ENCODE measurements at regions of chr14 and their contacts with region 1.

Region 1: DNA sequence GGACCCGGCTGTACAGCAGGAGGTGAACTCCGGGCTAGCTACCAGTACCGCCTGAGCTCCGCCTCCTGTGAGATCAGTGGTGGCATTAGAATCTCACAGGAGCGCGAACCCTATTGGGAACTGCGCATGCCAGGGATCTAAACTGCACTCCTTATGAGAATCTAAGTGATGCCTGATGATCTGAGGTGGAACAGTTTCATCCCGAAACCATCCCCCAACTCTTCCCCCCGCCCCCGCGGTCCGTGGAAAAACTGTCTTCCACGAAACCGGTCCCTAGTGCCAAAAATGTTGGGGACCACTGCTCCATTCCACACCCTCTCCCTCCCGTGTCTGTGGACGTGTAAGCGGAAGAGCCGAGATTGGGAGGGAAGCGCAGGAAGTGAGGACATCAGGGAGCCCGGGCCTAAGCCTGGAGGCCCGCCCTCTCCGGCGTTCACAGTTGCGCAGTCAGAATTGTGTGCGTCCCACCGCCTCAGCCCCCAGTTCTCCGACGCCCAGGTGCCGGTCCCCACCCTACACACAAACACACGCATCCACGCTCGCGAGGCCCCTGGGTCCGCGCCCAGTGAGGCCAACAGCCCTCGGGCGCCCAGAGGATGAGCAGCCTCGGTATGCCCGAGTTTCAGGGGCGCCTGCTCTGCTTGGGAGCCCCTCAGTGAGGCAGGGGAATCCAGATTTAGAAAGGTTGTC is 1.8 kb upstream of the RNASE4 start:
- DNase-seq: peak; percentile 85
- H3K4me3 Mint-ChIP-seq: no peak overlapping the region
- H3K27ac Mint-ChIP-seq: no peak overlapping the region
- H3K4me1 Mint-ChIP-seq: peaks cover 27% of the 10 kb centered on the region
- H3K27me3 Mint-ChIP-seq: no peaks in the 10 kb centered on the region

Region 2: DNA sequence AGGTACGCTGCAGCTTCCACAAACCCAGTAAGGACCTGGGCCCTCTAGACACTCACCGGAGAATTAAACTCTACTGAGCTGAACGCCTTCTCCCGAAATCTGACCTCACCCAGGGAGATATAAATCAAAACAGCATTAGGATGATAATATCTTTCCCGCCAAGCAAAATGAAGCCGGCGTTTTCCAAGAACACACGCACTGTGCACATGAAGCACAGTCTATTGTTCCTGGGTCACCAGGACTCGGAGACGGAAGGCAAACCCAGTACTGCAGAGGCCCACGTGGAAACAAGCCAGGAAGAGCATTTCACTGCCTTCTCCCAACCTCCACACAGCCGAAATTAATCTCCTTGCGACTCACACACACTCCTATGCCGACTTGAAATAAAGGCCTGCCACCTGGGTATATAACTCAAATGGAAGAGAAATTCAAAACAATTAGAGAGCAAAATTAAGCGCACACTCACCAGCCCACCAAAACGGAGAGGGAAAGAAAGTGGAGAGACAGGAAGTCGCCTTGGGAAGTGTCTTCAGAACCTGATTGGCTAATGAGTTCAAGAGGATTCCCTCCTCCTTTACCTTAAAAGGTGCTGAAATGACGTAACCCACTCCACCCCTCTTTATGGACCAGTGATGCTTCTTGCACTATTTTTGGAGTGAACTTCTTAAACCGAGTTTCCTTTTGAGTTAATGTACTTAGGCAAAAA is 349.6 kb before region 1 on chr14 and contains the start of gene CCNB1IP1:
- CTCF ChIA-PET with region 1: interaction called, 5 read pairs
- POLR2A ChIA-PET with region 1: interaction called, 4 read pairs
- intact Hi-C with region 1: loop called (anchors 2 kb)
- DNase-seq: peak; percentile 54
- H3K4me3 Mint-ChIP-seq: peak within 1 kb of the TSS; percentile 99
- H3K27ac Mint-ChIP-seq: peak within 1 kb of the TSS; percentile 92
- H3K4me1 Mint-ChIP-seq: peaks cover 36% of the 10 kb centered on the region
- H3K27me3 Mint-ChIP-seq: no peaks in the 10 kb centered on the region
- total RNA-seq, gene CCNB1IP1: 70.2 to 77.4 TPM

Region 3: GRCh38 chr14:20400965-20401593 is 281.5 kb before region 1 on chr14:
- CTCF ChIA-PET with region 1: no interaction called
- POLR2A ChIA-PET with region 1: no interaction called
- intact Hi-C with region 1: no loop called
- DNase-seq: peak; percentile 43
- H3K4me3 Mint-ChIP-seq: peak overlapping the region; percentile 52
- H3K27ac Mint-ChIP-seq: peak overlapping the region; percentile 95
- H3K4me1 Mint-ChIP-seq: peaks cover 30% of the 10 kb centered on the region
- H3K27me3 Mint-ChIP-seq: no peaks in the 10 kb centered on the region

Region 4: DNA sequence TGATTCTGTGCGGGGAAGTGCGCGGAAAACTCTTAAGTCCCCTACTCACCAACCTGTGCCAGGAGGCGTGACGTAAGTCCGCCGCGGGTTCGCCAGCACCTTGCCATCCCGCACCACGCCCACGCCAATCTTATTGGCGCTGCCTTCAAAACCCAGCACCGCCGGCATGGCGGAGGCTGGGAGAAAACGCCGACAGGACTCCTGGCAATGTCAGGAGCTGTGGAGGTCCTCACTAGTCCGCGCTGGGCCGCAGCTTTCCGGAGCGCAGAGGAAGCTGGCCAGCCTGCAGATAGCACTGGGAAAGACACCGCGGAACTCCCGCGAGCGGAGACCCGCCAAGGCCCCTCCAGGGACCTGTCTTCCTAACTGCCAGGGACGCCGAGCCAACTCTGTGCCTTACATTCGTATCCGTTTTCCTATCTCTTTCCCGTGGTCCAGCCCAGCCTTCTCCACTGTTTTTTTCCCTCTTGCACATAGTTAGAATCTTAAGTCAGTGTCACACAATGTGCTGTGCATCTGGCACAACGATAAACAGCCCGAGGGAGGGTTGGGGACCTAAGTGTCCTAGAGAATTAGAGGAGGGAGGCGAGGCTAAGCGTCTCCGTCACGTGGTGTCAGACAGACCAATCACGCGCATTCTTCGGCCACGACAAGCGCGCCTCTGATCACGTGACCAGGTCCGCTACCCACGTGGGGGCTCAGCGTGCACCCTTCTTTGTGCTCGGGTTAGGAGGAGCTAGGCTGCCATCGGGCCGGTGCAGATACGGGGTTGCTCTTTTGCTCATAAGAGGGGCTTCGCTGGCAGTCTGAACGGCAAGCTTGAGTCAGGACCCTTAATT is 227.8 kb before region 1 on chr14 and contains the starts of genes APEX1 and OSGEP:
- CTCF ChIA-PET with region 1: interaction called, 3 read pairs
- POLR2A ChIA-PET with region 1: interaction called, 3 read pairs
- intact Hi-C with region 1: loop called (anchors 1 kb)
- DNase-seq: peak; percentile 99
- H3K4me3 Mint-ChIP-seq: peak within 1 kb of the TSS; percentile 13
- H3K27ac Mint-ChIP-seq: no peak within 1 kb of the TSS
- H3K4me1 Mint-ChIP-seq: peaks cover 22% of the 10 kb centered on the region
- H3K27me3 Mint-ChIP-seq: no peaks in the 10 kb centered on the region
- total RNA-seq, gene APEX1: 186 to 193 TPM
- total RNA-seq, gene OSGEP: 39.2 to 41.0 TPM

Region 5: DNA sequence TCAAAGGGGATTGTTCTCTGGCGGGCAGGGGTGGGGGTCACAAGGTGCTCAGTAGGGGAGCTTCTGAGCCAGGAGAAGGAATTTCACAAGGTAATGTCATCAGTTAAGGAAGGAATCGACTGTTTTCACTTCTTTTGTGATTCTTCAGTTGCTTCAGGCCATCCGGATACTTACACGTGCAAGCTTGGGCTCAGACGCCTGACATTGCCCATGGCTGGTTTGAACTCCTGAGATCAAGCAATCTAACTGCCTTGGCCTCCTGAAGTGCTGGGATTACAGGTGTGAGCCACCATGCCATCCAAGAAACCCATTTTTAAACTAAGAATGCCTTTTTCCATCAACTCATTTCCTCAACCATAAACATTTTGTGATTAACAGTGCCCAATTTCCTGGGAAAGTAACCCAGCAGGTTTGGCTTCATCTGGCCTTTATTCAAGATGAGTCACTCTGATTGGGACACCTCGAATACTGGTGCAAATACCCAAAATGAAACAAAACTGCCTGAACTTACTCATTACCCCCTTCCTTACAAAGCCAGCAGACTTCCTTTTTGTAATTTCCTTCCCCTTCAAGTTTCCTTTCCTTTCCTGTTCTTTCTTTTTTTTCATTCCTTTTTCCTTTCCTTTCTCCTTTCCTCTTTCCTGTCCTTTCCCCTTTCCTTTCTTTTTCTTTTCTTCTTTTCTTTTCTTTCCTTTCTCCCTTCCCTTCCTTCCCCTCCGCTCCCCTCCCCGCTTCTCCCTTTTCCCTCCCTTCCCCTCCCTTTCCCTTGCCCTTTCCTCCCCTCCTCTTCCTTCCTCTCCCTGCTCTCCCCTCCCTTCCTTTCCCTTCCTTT is 187.4 kb before region 1 on chr14:
- CTCF ChIA-PET with region 1: no interaction called
- POLR2A ChIA-PET with region 1: no interaction called
- intact Hi-C with region 1: loop called (anchors 5 kb)
- DNase-seq: no peak
- H3K4me3 Mint-ChIP-seq: no peak overlapping the region
- H3K27ac Mint-ChIP-seq: peak overlapping the region; percentile 35
- H3K4me1 Mint-ChIP-seq: peaks cover 45% of the 10 kb centered on the region
- H3K27me3 Mint-ChIP-seq: no peaks in the 10 kb centered on the region

Region 6: GRCh38 chr14:20601482-20602080 is 81.0 kb before region 1 on chr14:
- CTCF ChIA-PET with region 1: no interaction called
- POLR2A ChIA-PET with region 1: no interaction called
- intact Hi-C with region 1: no loop called
- DNase-seq: no peak
- H3K4me3 Mint-ChIP-seq: no peak overlapping the region
- H3K27ac Mint-ChIP-seq: no peak overlapping the region
- H3K4me1 Mint-ChIP-seq: no peaks in the 10 kb centered on the region
- H3K27me3 Mint-ChIP-seq: no peaks in the 10 kb centered on the region

Region 7: GRCh38 chr14:20644520-20644919 is 38.1 kb before region 1 on chr14:
- CTCF ChIA-PET with region 1: no interaction called
- POLR2A ChIA-PET with region 1: no interaction called
- intact Hi-C with region 1: no loop called
- DNase-seq: no peak
- H3K4me3 Mint-ChIP-seq: no peak overlapping the region
- H3K27ac Mint-ChIP-seq: no peak overlapping the region
- H3K4me1 Mint-ChIP-seq: no peaks in the 10 kb centered on the region
- H3K27me3 Mint-ChIP-seq: peaks cover 11% of the 10 kb centered on the region

Region 8: GRCh38 chr14:20662968-20663732 is 19.4 kb before region 1 on chr14:
- CTCF ChIA-PET with region 1: interaction called, 72 read pairs
- POLR2A ChIA-PET with region 1: interaction called, 8 read pairs
- intact Hi-C with region 1: loop called (anchors 1 kb)
- DNase-seq: peak; percentile 93
- H3K4me3 Mint-ChIP-seq: peak overlapping the region; percentile 74
- H3K27ac Mint-ChIP-seq: peak overlapping the region; percentile 62
- H3K4me1 Mint-ChIP-seq: peaks cover 25% of the 10 kb centered on the region
- H3K27me3 Mint-ChIP-seq: peaks cover under 1% of the 10 kb centered on the region

Region 9: DNA sequence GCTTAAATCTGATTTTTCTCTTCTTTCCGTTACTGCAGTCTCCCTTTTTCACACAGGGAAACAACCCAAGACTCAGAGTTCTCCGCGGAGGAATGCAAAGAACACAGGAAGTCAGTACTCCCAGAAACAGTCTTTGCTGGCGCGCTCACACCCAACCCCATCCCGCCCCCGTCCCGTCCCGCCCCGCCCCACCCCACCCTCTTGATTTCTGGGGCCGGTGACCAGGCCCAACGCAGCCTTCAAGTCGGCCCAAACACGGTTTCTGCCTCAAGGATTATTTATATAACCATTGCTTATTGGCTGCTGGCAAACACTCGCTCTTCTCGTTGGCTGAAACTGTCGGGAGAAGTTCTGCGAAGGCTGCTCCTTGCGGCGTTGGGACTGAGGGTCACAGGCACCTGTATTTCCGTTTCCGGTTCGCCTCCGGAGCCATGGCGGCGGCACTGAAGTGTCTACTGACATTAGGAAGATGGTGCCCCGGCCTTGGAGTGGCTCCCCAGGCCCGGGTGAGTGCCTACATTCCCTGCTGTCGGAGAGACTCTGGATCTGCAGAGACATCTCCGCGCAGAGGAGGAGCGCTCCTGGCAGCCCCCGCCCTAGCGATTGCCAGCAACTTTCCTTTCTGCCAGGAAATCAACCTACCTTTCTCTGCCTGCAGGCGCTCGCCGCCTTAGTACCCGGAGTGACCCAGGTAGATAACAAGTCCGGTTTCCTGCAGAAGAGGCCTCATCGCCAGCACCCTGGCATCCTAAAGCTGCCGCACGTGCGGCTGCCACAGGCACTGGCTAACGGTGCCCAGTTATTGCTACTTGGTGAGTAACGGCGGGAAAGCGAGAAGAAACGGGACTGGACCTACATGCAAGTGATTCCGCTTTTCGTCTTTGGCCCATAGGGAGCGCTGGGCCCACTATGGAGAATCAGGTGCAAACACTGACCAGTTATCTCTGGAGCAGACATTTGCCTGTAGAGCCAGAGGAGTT is 307.3 kb after region 1 on chr14 and contains the start of gene METTL17:
- CTCF ChIA-PET with region 1: no interaction called
- POLR2A ChIA-PET with region 1: no interaction called
- intact Hi-C with region 1: loop called (anchors 5 kb)
- DNase-seq: peak; percentile 94
- H3K4me3 Mint-ChIP-seq: peak within 1 kb of the TSS; percentile 91
- H3K27ac Mint-ChIP-seq: peak within 1 kb of the TSS; percentile 84
- H3K4me1 Mint-ChIP-seq: peaks cover 30% of the 10 kb centered on the region
- H3K27me3 Mint-ChIP-seq: no peaks in the 10 kb centered on the region
- total RNA-seq, gene METTL17: 74.9 to 78.9 TPM